ENCODE measurements at regions of chr10 and their contacts with region 1.

Region 1: DNA sequence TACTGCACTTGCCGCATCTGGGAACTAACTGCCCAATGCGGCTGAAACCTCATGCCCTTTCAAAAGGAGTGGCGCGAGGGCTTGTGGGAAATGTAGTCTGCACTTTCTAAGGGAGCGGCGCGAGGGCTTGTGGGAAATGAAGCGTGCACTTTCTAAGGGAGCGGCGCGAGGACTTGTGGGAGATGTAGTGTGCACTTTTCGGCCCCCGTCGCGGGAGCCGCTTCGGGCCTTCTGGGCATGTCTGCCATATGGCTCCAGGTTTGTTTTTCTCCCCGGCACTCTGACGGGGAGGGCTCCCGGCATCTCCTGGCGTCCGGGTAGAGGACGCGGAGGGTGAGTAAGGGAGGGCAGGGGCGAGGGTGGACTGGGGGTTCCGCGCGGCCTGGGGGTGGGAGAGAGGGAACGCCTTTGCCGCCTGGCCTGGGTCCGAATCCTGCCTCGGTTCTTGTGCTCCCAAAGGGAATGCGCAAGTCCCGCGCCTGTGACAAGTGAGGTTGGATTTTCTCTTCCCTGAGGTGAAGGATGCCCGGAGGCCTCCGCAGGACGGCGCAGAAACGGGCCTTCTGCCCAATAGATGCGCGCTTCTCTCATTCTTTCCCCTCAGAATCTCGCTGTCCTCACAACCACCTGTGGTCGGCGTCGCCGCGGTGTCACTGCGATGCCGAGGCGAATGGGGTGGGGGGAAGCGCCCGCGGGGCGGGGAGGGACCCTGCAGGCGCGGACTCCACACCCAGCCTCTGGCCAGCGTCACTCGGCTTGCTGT is at the start of gene ZNF37A:
- DNase-seq: peak; percentile 94
- ATAC-seq: peak; percentile 98
- H3K4me3 Mint-ChIP-seq: peak within 1 kb of the TSS; percentile 85
- H3K27ac Mint-ChIP-seq: peak within 1 kb of the TSS; percentile 90
- H3K4me1 Mint-ChIP-seq: peaks cover 31% of the 10 kb centered on the region
- H3K27me3 Mint-ChIP-seq: no peaks in the 10 kb centered on the region
- total RNA-seq, gene ZNF37A: 24.1 to 25.5 TPM

Region 2: GRCh38 chr10:37976091-37976879 is 118.1 kb before region 1 on chr10 and contains the start of gene ZNF25:
- CTCF ChIA-PET with region 1: interaction called, 4 read pairs
- POLR2A ChIA-PET with region 1: no interaction called
- intact Hi-C with region 1: loop called (anchors 1 kb)
- DNase-seq: peak; percentile 99
- ATAC-seq: peak; percentile 92
- H3K4me3 Mint-ChIP-seq: peak within 1 kb of the TSS; percentile 88
- H3K27ac Mint-ChIP-seq: peak within 1 kb of the TSS; percentile 97
- H3K4me1 Mint-ChIP-seq: peaks cover 12% of the 10 kb centered on the region
- H3K27me3 Mint-ChIP-seq: no peaks in the 10 kb centered on the region
- total RNA-seq, gene ZNF25: 7.3 to 7.5 TPM